ENCODE measurements at regions of chr11 and their contacts with region 1.

Region 1: GRCh38 chr11:42795029-42795428 is 516.8 kb upstream of the API5 start:
- DNase-seq: no peak
- H3K4me3 ChIP-seq: no peak overlapping the region
- H3K27ac ChIP-seq: no peak overlapping the region
- H3K27me3 ChIP-seq: no peaks in the 10 kb centered on the region
- CTCF ChIP-seq: no peak

Region 2: DNA sequence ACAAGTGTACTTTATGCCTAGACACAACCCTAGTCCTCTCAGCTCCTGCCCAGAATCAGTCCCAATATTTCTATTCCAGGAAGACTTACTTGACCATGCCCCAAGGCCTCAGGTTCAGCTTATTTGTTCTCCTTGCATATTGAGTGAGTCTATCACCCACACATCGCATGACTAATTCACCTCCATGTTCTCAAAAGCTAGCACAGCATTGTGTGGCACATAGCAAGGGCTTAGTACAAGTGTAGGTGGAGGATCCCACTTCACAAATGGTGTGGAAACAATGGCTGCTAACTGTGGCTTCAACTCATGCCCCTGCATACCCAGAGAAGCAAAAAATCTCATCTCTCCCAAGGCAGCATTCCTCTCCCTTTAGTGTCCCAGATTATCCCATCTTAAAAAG is 85.8 kb before region 1 on chr11:
- CTCF ChIA-PET with region 1: no interaction called
- POLR2A ChIA-PET with region 1: no interaction called
- DNase-seq: no peak
- H3K4me3 ChIP-seq: no peak overlapping the region
- H3K27ac ChIP-seq: no peak overlapping the region
- H3K27me3 ChIP-seq: no peaks in the 10 kb centered on the region
- CTCF ChIP-seq: no peak

Region 3: DNA sequence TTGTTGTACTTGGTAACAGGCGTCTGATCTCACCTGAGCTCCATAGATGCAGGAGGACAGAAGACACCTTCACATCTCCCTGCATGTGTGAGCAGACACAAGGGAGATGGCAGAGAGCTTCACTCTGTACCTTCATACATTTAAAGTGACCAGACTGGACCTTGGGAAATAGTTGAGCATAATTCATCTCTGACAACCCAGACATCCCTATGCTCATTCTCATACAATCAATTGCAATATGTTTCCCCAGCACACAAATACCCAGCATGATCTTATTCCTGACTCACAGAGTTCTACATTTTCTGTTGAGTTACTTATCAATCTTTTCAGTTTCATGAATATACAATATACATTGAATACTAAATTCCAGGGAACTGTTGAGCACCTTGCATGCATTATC is 28.5 kb after region 1 on chr11:
- CTCF ChIA-PET with region 1: no interaction called
- POLR2A ChIA-PET with region 1: no interaction called
- DNase-seq: no peak
- H3K4me3 ChIP-seq: no peak overlapping the region
- H3K27ac ChIP-seq: no peak overlapping the region
- H3K27me3 ChIP-seq: no peaks in the 10 kb centered on the region
- CTCF ChIP-seq: no peak

Region 4: DNA sequence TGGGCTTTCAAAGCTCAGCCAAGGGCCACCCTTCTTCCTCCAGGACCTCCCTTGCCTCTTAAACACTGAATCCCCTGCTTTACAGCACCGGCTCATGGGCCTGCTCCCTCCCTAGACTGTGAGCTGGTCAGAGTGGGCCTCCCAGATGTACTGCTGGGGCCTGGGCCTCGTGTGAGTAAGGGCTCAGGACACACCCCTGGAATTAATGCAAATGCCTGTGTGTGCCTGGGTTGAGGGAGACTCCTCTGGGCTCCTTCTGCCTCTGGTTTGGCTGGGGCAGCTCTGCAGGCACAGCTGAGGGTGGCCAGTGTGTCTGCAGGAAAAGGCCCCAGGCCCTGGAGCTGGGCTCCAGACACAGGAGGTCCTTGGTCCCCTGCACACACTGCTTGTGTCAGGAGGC is 1490.7 kb after region 1 on chr11:
- CTCF ChIA-PET with region 1: interaction called, 10 read pairs
- POLR2A ChIA-PET with region 1: no interaction called
- DNase-seq: no peak
- H3K4me3 ChIP-seq: no peak overlapping the region
- H3K27ac ChIP-seq: no peak overlapping the region
- H3K27me3 ChIP-seq: peaks cover 7% of the 10 kb centered on the region
- CTCF ChIP-seq: no peak

Measured in AG04450 (cell line).